ENCODE measurements at regions of chr7 and their contacts with region 1.

Region 1: DNA sequence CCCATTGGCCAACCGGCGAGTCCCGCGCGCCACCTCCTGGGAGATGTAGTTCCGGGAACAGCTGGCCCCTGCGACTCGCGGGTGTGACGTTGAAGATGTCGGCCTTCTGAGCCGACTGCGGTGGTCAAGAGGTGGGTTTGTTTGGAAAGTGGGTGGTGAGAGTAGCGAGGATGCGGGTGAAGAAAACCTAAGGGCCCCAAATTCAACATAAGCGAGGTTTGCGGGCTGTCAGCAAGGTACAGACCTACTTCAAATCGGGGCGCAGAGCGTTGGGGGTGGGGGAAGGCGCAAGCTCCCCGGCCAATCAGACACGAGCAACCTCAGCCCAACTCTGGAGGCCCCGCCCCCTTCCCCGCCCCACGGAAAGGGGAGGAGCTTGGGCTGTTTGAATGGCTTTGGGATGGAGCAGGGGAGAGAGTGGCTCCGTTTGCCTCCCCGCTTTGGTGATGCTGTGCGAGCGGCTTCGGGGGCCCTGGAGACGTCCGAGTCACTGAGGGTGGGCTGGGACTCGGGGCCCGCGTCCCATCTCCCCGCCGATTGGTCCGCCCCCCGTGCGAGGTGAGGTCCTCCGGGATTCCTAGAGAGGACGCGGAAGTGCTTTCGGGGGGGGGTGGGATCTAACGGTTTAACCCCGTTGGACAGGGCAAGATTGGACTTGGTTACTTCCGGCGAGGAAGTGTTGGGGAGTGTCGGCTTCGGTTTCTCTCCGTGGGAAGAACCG is at the start of gene ZKSCAN5:
- DNase-seq: peak; percentile 99
- H3K4me3 ChIP-seq: peak within 1 kb of the TSS; percentile 76 to 86
- H3K27ac ChIP-seq: peak within 1 kb of the TSS; percentile 94 to 96
- H3K4me1 ChIP-seq: peaks cover 17% of the 10 kb centered on the region
- H3K27me3 ChIP-seq: no peaks in the 10 kb centered on the region
- CTCF ChIP-seq: no peak
- POLR2A ChIP-seq: no peak
- total RNA-seq, gene ZKSCAN5: 19.9 to 24.9 TPM

Region 2: DNA sequence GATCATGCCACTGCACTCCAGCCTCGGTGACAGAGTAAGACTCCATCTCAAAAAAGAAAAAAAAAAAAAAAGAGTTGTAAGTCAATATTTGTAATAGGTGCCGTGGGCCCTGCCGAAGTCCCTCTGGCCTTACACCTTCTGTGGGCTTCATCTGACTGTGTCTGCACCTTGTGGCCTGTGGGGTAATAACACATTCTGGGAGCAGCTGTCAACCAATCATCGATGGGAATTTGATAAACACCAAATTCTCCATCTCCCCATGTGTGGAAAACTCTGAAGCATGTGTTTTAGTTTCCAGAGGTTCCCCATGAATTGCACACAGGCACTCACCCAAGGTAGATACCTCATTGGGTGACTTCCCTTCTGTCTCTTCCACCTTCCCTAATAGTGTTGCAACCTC is 15.5 kb before region 1 on chr7:
- intact Hi-C with region 1: no loop called
- DNase-seq: no peak
- H3K4me3 ChIP-seq: no peak overlapping the region
- H3K27ac ChIP-seq: no peak overlapping the region
- H3K4me1 ChIP-seq: no peaks in the 10 kb centered on the region
- H3K27me3 ChIP-seq: no peaks in the 10 kb centered on the region
- CTCF ChIP-seq: no peak
- POLR2A ChIP-seq: no peak

Region 3: GRCh38 chr7:99551767-99552463 is 47.2 kb after region 1 on chr7 and contains the start of gene FAM200A:
- intact Hi-C with region 1: loop called (anchors 10 kb)
- DNase-seq: peak; percentile 93
- H3K4me3 ChIP-seq: peak within 1 kb of the TSS; percentile 85 to 98
- H3K27ac ChIP-seq: peak within 1 kb of the TSS; percentile 84 to 90
- H3K4me1 ChIP-seq: peaks cover 9% of the 10 kb centered on the region
- H3K27me3 ChIP-seq: no peaks in the 10 kb centered on the region
- CTCF ChIP-seq: no peak
- POLR2A ChIP-seq: no peak
- total RNA-seq, gene FAM200A: 9.2 to 11.5 TPM